A549 (cell line): ENCODE measurements at regions of chr12 and their contacts with region 1.

Region 1: DNA sequence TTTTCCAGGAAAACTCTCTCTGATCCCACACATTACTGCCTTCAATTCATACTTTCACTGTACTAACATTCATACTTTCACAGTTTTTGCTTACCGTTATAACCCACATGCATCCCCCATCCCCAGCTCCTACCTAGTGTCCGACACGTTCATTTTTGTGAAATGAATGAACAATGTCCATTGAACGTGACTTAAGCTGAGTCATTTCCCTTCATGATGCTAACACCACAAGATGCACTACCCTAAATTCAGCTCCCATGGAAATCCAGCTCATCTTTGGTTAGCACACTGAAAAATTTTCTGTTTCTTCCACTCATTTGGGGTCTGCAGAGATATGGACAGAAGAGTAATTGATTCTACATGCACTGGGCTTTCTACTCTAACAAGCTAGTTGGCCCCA is 84.7 kb downstream of the GALNT4 start:
- DNase-seq: no peak
- ATAC-seq: no peak
- H3K4me3 ChIP-seq: no peak overlapping the region
- H3K27ac ChIP-seq: no peak overlapping the region
- H3K4me1 ChIP-seq: no peaks in the 10 kb centered on the region
- CTCF ChIP-seq: no peak
- EP300 ChIP-seq: no peak
- POLR2A ChIP-seq: no peak
- RAD21 ChIP-seq: no peak

Region 2: GRCh38 chr12:89029961-89030360 is 410.0 kb before region 1 on chr12:
- CTCF ChIA-PET with region 1: no interaction called
- POLR2A ChIA-PET with region 1: interaction called, 10 read pairs
- DNase-seq: no peak
- ATAC-seq: no peak
- H3K4me3 ChIP-seq: no peak overlapping the region
- H3K27ac ChIP-seq: no peak overlapping the region
- H3K4me1 ChIP-seq: no peaks in the 10 kb centered on the region
- CTCF ChIP-seq: no peak
- EP300 ChIP-seq: no peak
- POLR2A ChIP-seq: no peak
- RAD21 ChIP-seq: no peak